ENCODE measurements at regions of chr18 and their contacts with region 1.

Region 1: DNA sequence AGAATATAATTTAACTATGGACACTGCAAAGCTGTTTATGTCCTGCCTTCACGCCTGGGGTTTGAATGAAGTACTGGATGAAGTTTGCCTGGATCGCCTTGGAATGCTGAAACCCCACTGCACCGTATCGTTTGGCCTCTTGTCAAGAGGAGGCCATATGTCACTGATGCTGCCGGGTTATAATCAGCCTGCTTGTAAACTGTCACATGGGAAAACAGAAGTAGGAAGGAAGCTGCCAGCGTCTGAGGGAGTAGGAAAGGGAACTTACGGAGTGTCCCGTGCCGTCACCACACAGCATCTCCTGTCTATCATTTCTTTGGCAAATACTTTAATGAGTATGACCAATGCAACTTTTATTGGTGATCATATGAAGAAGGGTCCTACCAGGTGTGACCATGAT is 105.8 kb downstream of the WDR7 start:
- DNase-seq: peak in 17 of 42 donors; percentile 5 to 48 (median 15)

Region 2: GRCh38 chr18:56455141-56455540 is 301.8 kb before region 1 on chr18:
- intact Hi-C with region 1: no loop called
- DNase-seq: no peak

Region 3: GRCh38 chr18:56468396-56468795 is 288.6 kb before region 1 on chr18:
- intact Hi-C with region 1: no loop called
- DNase-seq: no peak

Region 4: DNA sequence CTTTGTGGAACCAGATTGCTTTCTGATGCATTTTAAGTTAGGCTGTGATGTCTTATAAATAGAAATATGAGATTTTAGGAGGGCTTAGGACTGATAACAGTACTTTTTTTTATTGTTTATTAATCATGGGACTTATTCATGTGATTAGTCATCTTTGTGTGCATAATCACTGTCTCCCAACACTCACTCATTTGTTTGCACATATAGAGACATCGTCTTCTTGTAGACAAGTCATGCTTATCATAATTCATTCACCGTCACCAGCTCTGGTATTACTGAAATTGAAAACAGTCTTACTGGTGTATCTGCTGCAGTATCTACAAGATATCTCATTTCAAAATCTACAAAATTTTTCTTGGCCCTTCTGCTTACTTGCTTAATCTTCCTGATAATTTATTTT is 60.0 kb before region 1 on chr18:
- intact Hi-C with region 1: no loop called
- DNase-seq: no peak

Region 5: DNA sequence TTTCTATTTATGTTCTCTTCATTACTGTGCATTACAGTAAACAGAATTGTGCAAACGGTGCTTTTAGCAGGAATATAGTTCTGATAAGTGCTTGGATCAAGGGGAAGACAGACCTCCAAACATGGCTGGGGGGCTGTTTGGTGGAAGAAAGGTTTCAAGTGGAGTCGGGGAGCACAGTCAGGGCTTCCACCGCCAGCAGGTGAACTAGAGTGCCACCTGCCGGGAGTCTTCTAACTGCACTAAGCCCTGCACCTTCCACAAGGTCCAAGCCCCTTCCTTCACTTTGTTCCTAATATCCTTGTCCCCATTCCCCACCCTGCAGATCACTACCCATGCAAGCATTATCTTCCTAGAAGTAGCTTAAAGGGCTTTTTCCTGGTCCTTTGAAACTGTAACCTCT is 689.4 kb after region 1 on chr18:
- intact Hi-C with region 1: loop called (anchors 10 kb)
- DNase-seq: peak in 26 of 42 donors; percentile 25 to 81 (median 64)

Measured in head of caudate nucleus (tissue), 42 donors.